PC-9 (cell line): ENCODE measurements at regions of chr11 and their contacts with region 1.

Region 1: GRCh38 chr11:68121067-68121899 is at the start of gene CHKA:
- DNase-seq: peak; percentile 88 to 97
- H3K4me3 ChIP-seq: peak within 1 kb of the TSS; percentile 92
- H3K27ac ChIP-seq: peak within 1 kb of the TSS; percentile 97
- H3K4me1 ChIP-seq: peaks cover 77% of the 10 kb centered on the region
- H3K27me3 ChIP-seq: no peaks in the 10 kb centered on the region
- CTCF ChIP-seq: no peak
- total RNA-seq, gene CHKA: 84.2 and 90.5 TPM in 2 replicates

Region 2: GRCh38 chr11:68003846-68004550 is 117.3 kb before region 1 on chr11 and contains the start of gene UNC93B1:
- CTCF ChIA-PET with region 1: no interaction called
- POLR2A ChIA-PET with region 1: interaction called, 38 read pairs
- intact Hi-C with region 1: no loop called
- DNase-seq: peak; percentile 83 to 92
- H3K4me3 ChIP-seq: peak within 1 kb of the TSS; percentile 68
- H3K27ac ChIP-seq: no peak within 1 kb of the TSS
- H3K4me1 ChIP-seq: peaks cover 12% of the 10 kb centered on the region
- H3K27me3 ChIP-seq: no peaks in the 10 kb centered on the region
- CTCF ChIP-seq: no peak
- total RNA-seq, gene UNC93B1: 75.5 and 94.4 TPM in 2 replicates

Region 3: DNA sequence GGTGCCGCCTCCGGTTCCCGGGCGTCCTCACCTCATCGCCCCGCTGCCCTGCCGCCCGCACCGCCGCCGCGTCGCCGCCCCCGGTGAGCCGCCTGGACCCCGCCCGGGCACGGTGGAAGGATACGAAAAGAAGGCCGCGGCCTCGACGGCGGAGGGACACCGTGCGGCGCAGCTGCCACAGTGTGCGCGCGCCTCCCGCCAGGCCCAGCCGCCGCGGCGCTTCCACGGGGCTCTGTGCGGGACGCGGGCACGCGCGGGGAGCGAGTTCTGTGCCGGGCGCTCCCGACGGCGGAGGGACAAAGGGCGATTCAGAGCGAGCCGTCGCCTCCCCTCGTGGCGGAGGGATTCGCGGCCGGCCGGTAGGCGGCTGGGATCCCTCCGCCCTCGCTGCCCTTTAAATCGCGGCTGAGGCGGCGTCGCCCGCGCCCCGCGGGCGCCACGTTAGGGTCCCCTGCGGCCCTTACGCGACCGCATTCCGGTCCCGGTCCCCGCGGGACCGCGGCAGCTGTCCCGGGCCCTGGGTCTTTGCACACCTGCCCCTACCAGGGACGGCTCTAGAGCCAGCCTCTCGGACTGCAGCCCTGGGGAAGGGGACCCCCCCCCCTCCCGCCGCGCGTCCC is 92.4 kb after region 1 on chr11:
- CTCF ChIA-PET with region 1: interaction called, 6 read pairs
- POLR2A ChIA-PET with region 1: no interaction called
- intact Hi-C with region 1: loop called (anchors 2 kb)
- DNase-seq: peak; percentile 72 to 83
- H3K4me3 ChIP-seq: peak overlapping the region; percentile 80
- H3K27ac ChIP-seq: peak overlapping the region; percentile 91
- H3K4me1 ChIP-seq: peaks cover 23% of the 10 kb centered on the region
- H3K27me3 ChIP-seq: no peaks in the 10 kb centered on the region
- CTCF ChIP-seq: peak; percentile 14; the same call in 1 of the 2 replicates